BJ (cell line): ENCODE measurements at regions of chr20 and their contacts with region 1.

Region 1: GRCh38 chr20:3115190-3116107 is 30.9 kb upstream of the AVP start:
- DNase-seq: no peak
- H3K4me3 ChIP-seq: no peak overlapping the region
- H3K27me3 ChIP-seq: no peaks in the 10 kb centered on the region
- CTCF ChIP-seq: peak; percentile 81

Region 2: GRCh38 chr20:3000852-3001523 is 114.5 kb before region 1 on chr20:
- CTCF ChIA-PET with region 1: no interaction called
- POLR2A ChIA-PET with region 1: no interaction called
- DNase-seq: no peak
- H3K4me3 ChIP-seq: no peak overlapping the region
- H3K27me3 ChIP-seq: no peaks in the 10 kb centered on the region
- CTCF ChIP-seq: peak; percentile 53

Region 3: DNA sequence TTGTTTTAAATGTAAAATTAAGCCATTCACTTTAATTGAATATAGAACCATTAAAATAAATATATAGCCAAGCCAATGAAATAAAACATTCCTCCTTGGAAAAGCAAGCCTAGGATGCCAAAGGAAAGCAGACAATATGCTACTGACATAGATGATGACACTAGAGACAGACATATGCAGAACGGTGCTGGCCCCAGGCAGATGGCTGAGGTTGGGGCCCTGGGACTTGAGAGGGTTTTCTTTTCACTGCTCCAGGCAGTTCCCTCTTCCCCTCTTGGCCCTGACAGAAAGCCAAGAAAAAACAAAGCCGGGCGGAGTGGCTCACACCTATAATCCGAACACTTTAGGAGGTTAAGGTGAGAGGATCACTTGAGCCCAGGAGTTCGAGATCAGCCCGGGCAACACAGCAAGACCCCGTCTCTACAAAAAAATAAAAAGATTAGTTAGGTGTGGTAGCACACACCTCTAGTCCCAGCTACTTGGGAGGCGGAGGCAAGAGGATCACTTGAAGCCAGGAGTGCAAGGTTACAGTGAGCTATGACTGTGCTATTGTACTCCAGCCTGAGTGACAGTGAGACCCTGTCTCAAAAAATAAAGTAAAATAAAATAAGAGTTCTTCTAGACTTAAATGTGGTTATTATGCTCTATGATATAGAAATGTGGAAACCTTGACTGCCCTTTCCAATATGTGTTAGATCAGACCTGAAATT is 13.0 kb after region 1 on chr20:
- CTCF ChIA-PET with region 1: interaction called, 22 read pairs
- POLR2A ChIA-PET with region 1: no interaction called
- DNase-seq: no peak
- H3K4me3 ChIP-seq: no peak overlapping the region
- H3K27me3 ChIP-seq: no peaks in the 10 kb centered on the region
- CTCF ChIP-seq: no peak